Endothelial cell of umbilical vein (primary cell): ENCODE measurements at regions of chr5 and their contacts with region 1.

Region 1: GRCh38 chr5:144203750-144204596 is 33.3 kb downstream of the KCTD16 start:
- DNase-seq: peak; percentile 81
- H3K4me3 ChIP-seq: no peak overlapping the region
- H3K27ac ChIP-seq: no peak overlapping the region
- H3K4me1 ChIP-seq: peaks cover 9% of the 10 kb centered on the region
- H3K27me3 ChIP-seq: no peaks in the 10 kb centered on the region
- CTCF ChIP-seq: peak; percentile 69 to 75
- POLR2A ChIP-seq: no peak

Region 2: DNA sequence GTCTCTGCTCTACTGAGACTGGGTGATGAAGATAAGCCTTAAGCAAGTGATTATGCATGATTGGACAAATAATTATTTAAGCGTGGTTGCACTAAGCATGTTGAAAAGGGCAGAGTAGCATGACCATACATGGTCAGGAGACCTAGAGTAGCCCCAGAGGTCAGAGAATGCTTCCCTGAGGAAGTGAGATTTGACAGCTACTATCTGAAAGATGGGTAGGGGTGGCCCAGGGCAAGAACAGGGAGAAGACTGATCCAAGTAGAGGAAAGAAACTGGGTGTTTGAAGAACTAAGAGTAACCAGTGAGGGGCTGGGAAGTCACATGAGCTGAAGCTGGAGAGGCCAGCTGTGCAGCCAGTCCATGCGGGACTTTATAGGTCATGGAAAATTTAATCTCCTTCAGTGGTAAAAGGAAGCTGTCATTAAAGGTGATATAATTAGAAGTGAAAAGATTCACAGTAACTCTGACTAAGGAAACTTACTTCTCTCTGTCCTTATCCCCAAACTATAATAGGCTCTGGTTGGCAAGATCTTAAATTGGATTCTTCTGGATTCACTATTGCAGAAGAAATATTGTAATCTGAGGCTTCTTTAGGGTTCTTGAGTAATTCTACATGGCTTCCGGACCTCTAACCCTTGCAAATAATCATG is 68.7 kb before region 1 on chr5:
- CTCF ChIA-PET with region 1: no interaction called
- POLR2A ChIA-PET with region 1: no interaction called
- dilution Hi-C with region 1: no loop called
- intact Hi-C with region 1: no loop called
- DNase-seq: no peak
- H3K4me3 ChIP-seq: no peak overlapping the region
- H3K27ac ChIP-seq: no peak overlapping the region
- H3K4me1 ChIP-seq: no peaks in the 10 kb centered on the region
- H3K27me3 ChIP-seq: no peaks in the 10 kb centered on the region
- CTCF ChIP-seq: no peak
- POLR2A ChIP-seq: no peak

Region 3: GRCh38 chr5:144170276-144171024 is 33.5 kb before region 1 on chr5 and contains the starts of genes KCTD16 and YIPF5:
- CTCF ChIA-PET with region 1: no interaction called
- POLR2A ChIA-PET with region 1: no interaction called
- dilution Hi-C with region 1: no loop called
- intact Hi-C with region 1: no loop called
- DNase-seq: peak; percentile 97
- H3K4me3 ChIP-seq: peak within 1 kb of the TSS; percentile 79 to 92 (median 92)
- H3K27ac ChIP-seq: peak within 1 kb of the TSS; percentile 83
- H3K4me1 ChIP-seq: peaks cover 23% of the 10 kb centered on the region
- H3K27me3 ChIP-seq: no peaks in the 10 kb centered on the region
- CTCF ChIP-seq: no peak
- POLR2A ChIP-seq: peak; percentile 78
- total RNA-seq, gene KCTD16: 0.30 and 0.49 TPM in 2 replicates
- total RNA-seq, gene YIPF5: 73.7 and 90.0 TPM in 2 replicates

Region 4: GRCh38 chr5:144191998-144192397 is 12.0 kb before region 1 on chr5:
- CTCF ChIA-PET with region 1: interaction called, 15 read pairs
- POLR2A ChIA-PET with region 1: interaction called, 3 read pairs
- dilution Hi-C with region 1: no loop called
- intact Hi-C with region 1: no loop called
- DNase-seq: peak; percentile 88
- H3K4me3 ChIP-seq: no peak overlapping the region
- H3K27ac ChIP-seq: peak overlapping the region; percentile 88
- H3K4me1 ChIP-seq: peaks cover 44% of the 10 kb centered on the region
- H3K27me3 ChIP-seq: no peaks in the 10 kb centered on the region
- CTCF ChIP-seq: peak; percentile 43 to 60
- POLR2A ChIP-seq: no peak

Region 5: DNA sequence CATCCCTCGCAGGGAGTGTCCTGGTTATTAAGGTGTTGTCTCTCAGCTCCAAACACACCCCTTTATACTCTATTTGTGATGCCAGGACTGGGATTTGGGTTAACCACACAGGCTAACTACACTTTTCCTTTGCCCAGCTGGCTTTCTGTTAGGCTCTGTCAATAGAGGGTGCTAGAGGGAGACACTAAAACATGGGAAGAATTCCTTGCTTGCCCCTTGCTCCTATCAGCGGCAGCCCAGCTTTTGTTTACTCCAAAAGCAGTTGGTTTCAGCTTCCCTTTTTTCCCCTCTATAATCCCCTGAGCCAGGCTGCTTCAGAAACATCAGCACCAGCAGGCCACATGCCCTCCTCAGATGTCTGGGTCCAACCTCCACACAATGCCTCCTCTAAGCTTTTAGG is 263.8 kb after region 1 on chr5:
- CTCF ChIA-PET with region 1: interaction called, 9 read pairs
- POLR2A ChIA-PET with region 1: no interaction called
- dilution Hi-C with region 1: no loop called
- intact Hi-C with region 1: loop called (anchors 10 kb)
- DNase-seq: peak; percentile 40
- H3K4me3 ChIP-seq: no peak overlapping the region
- H3K27ac ChIP-seq: no peak overlapping the region
- H3K4me1 ChIP-seq: no peaks in the 10 kb centered on the region
- H3K27me3 ChIP-seq: no peaks in the 10 kb centered on the region
- CTCF ChIP-seq: peak; percentile 41 to 55
- POLR2A ChIP-seq: no peak

Region 6: DNA sequence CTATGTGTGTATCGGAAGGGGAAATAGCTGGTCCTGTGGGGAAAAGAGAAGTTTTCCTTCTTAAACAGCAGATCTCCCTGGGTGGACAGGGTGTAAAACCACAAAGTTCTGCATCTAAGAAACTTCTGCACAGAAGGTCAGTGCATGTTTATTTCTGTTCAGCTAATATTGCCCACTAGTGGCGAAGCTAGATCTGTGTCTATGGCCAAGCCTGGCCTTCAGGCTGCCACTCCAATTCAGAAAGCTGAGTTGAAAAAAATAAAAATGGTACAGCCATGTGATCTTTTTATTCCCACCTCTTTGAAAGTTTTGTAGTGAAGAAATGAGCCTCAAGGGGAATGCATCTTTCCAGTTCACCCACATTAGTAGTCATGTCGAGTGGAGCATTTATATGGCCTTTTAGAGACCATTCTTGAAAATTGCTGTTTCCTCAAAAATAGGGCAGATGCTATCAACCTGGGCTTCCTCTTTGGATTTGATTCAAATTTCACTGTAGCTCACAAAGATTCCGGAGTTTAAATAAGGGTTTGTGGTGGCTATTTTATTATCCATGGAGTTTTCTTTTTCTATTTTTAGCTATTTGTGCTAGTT is 1143.1 kb after region 1 on chr5:
- CTCF ChIA-PET with region 1: interaction called, 29 read pairs
- POLR2A ChIA-PET with region 1: no interaction called
- dilution Hi-C with region 1: no loop called
- intact Hi-C with region 1: loop called (anchors 2 kb)
- DNase-seq: peak; percentile 64
- H3K4me3 ChIP-seq: no peak overlapping the region
- H3K27ac ChIP-seq: no peak overlapping the region
- H3K4me1 ChIP-seq: peaks cover 21% of the 10 kb centered on the region
- H3K27me3 ChIP-seq: no peaks in the 10 kb centered on the region
- CTCF ChIP-seq: peak; percentile 50 to 64
- POLR2A ChIP-seq: no peak

Region 7: DNA sequence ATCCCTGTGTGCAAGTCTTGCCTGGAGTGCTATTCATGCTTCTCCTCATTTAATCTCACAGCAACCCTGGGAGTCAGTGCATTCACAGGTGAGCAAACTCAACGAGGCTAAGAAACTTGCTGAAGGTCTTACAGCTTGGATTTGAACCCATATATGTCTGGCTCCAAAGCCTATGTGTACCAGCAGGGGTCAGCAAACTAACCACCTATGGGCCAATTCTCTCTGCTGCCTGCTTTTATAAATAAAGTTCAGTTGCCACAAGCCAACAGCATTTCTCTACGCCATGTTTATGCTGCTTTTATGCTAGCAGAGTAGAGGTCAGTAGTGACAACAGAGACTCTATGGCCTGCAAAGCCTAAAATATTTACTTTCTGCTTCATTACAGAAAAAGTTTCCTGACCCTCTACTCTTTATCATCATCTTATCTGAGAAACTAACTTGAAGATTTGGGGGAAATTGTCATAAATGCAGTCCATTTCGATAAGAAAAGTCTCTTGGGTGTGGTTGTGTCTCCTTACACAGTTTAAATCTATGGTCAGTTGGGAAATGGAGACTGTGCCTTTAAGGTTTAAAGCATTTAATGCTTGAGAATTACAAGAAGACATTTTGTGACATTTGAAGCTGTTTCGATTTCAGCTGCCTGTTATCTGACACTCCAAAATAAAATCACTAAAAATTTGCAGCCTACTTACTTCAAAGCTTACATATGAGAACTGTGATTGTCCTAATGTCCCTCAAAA is 1493.4 kb after region 1 on chr5:
- CTCF ChIA-PET with region 1: interaction called, 8 read pairs
- POLR2A ChIA-PET with region 1: no interaction called
- dilution Hi-C with region 1: no loop called
- intact Hi-C with region 1: loop called (anchors 5 kb)
- DNase-seq: peak; percentile 68
- H3K4me3 ChIP-seq: no peak overlapping the region
- H3K27ac ChIP-seq: no peak overlapping the region
- H3K4me1 ChIP-seq: no peaks in the 10 kb centered on the region
- H3K27me3 ChIP-seq: no peaks in the 10 kb centered on the region
- CTCF ChIP-seq: peak; percentile 61 to 74
- POLR2A ChIP-seq: no peak

Region 8: GRCh38 chr5:145825751-145826180 is 1621.8 kb after region 1 on chr5:
- CTCF ChIA-PET with region 1: interaction called, 57 read pairs
- POLR2A ChIA-PET with region 1: no interaction called
- dilution Hi-C with region 1: no loop called
- intact Hi-C with region 1: loop called (anchors 2 kb)
- DNase-seq: peak; percentile 56
- H3K4me3 ChIP-seq: no peak overlapping the region
- H3K27ac ChIP-seq: no peak overlapping the region
- H3K4me1 ChIP-seq: peaks cover 21% of the 10 kb centered on the region
- H3K27me3 ChIP-seq: no peaks in the 10 kb centered on the region
- CTCF ChIP-seq: peak; percentile 54 to 59
- POLR2A ChIP-seq: no peak

Region 9: DNA sequence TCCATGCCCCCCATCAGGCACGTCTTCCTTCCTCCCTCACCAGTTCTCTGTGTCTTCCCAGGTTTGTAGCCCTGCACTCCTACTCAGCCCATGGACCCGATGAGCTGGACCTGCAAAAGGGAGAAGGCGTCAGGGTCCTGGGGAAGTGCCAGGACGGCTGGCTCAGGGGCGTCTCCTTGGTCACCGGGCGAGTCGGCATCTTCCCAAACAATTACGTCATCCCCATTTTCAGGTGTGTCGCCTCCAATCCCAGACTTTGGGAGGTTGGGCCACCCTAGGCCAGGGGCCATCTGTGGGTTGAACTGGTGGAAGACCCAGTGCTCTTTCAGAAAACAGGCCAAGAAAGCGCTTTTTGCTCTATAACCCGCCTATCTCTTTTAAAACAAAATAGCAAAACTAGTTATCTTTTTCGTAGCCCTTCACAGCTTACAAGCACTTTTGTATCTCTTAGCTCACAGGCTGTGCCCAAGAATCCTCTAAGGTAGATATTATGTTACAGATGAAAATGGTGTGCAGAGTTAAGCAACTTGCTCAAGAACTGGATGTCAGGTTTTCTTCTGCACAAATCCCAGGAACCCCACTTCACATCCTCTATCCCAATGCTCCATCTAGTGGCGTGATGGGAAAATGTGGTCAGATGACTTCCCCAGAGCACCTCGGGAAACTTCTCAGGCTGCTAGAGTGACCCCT is 1845.2 kb after region 1 on chr5:
- CTCF ChIA-PET with region 1: interaction called, 11 read pairs
- POLR2A ChIA-PET with region 1: no interaction called
- dilution Hi-C with region 1: no loop called
- intact Hi-C with region 1: loop called (anchors 1 kb)
- DNase-seq: peak; percentile 74
- H3K4me3 ChIP-seq: no peak overlapping the region
- H3K27ac ChIP-seq: no peak overlapping the region
- H3K4me1 ChIP-seq: no peaks in the 10 kb centered on the region
- H3K27me3 ChIP-seq: peaks cover 0 to 7% of the 10 kb centered on the region in 2 experiments
- CTCF ChIP-seq: peak; percentile 75
- POLR2A ChIP-seq: no peak